CD14-positive monocyte (primary cell): ENCODE measurements at regions of chr21 and their contacts with region 1.

Region 1: GRCh38 chr21:39079617-39080016 is 103.6 kb downstream of the PSMG1 start:
- DNase-seq: peak; percentile 94 to 97 (median 94)
- H3K4me3 ChIP-seq: peak overlapping the region in 1 of 3 experiments; percentile 27
- H3K4me3 Mint-ChIP-seq: peak overlapping the region in 1 of 2 donors; percentile 75
- H3K27ac ChIP-seq: peak overlapping the region; percentile 65 to 80
- H3K27ac Mint-ChIP-seq: peak overlapping the region; percentile 92 to 99 (median 96)
- H3K4me1 ChIP-seq: peaks cover 52 to 56% of the 10 kb centered on the region in 2 donors
- H3K4me1 Mint-ChIP-seq: peaks cover 44% of the 10 kb centered on the region
- H3K27me3 ChIP-seq: no peaks in the 10 kb centered on the region
- H3K27me3 Mint-ChIP-seq: peaks cover 0 to 5% (median 0%) of the 10 kb centered on the region in 3 donors
- CTCF ChIP-seq: no peak

Region 2: DNA sequence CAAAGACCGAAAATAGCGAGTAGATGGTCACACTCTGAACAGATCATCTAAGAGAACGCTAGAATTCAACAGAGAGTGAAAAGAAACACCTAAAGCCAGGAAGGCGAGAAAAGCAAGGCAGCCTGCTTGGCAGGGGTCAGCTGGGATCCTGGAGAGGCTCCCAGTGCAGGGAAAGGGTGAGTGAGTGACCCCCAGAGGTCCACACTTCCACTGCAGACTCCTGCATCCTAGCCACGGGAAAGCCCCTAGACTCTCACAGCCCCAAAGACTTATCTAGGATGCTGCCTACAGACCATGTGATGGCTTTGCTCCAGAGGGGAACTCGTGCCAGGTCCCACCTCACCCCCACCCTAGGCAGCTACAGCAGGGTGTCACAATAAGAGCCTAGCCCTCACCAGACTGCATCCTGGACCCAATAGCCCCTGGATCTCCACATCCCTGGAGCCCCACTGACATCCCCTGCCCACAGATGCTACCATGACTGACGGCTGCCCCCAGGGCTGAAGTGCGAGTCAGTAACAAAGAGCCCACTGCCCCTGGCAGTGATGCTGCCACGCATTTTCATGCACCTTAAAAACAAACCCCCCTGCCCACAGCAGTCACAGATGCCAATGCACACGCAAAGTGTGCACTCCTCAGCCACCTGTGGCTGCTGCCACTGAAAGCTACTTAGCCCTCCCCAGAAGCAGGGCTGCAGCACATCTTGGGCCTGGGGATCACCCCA is 41.4 kb after region 1 on chr21:
- intact Hi-C with region 1: loop called in 1 of 2 experiments (anchors 5 kb)
- DNase-seq: no peak
- H3K4me3 ChIP-seq: no peak overlapping the region
- H3K4me3 Mint-ChIP-seq: no peak overlapping the region
- H3K27ac ChIP-seq: no peak overlapping the region
- H3K27ac Mint-ChIP-seq: no peak overlapping the region
- H3K4me1 ChIP-seq: peaks cover 0 to 3% of the 10 kb centered on the region in 2 donors
- H3K4me1 Mint-ChIP-seq: peaks cover 17% of the 10 kb centered on the region
- H3K27me3 ChIP-seq: no peaks in the 10 kb centered on the region
- H3K27me3 Mint-ChIP-seq: peaks cover 0 to 3% (median 2%) of the 10 kb centered on the region in 3 donors
- CTCF ChIP-seq: no peak

Region 3: DNA sequence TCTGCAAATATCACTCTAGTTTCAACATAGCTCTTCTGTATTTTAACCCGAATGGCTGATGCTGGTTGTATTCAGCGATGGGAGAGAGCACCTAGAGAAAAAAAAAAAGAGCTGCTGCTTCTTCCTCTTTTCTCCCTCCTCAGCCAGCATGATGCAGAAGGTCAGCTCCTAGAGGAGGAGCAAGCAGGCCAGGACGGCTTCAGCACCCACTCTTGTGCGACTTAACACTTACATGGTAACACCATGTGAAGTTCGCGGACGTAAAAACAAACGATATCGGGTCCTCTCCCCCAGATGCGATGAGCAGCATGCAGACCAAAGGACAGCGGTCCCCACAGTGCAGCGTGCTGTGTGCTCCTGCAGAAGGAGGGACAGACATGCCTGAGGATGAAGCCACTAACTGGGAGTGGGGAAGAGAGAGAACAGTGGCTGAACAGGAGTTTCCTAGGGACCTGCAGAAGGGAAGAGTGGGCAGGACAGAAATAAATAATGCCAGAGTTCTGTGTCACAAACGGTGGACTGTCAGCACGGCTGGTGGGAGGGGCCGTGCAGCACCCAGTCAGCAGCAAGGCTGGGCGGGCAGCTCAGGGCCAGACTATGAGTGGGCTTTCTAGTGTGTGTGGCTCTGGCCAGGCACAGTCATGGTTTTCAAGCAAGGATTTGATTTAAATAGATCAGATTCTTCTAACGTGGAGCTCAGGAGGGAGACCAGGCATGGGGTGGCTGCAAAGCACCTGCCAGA is 521.7 kb after region 1 on chr21:
- intact Hi-C with region 1: no loop called
- DNase-seq: no peak
- H3K4me3 ChIP-seq: no peak overlapping the region
- H3K4me3 Mint-ChIP-seq: no peak overlapping the region
- H3K27ac ChIP-seq: no peak overlapping the region
- H3K27ac Mint-ChIP-seq: no peak overlapping the region
- H3K4me1 ChIP-seq: no peaks in the 10 kb centered on the region
- H3K4me1 Mint-ChIP-seq: no peaks in the 10 kb centered on the region
- H3K27me3 ChIP-seq: no peaks in the 10 kb centered on the region
- H3K27me3 Mint-ChIP-seq: peaks cover 6 to 7% (median 6%) of the 10 kb centered on the region in 3 donors
- CTCF ChIP-seq: no peak